ENCODE measurements at regions of chr2 and their contacts with region 1.

Region 1: DNA sequence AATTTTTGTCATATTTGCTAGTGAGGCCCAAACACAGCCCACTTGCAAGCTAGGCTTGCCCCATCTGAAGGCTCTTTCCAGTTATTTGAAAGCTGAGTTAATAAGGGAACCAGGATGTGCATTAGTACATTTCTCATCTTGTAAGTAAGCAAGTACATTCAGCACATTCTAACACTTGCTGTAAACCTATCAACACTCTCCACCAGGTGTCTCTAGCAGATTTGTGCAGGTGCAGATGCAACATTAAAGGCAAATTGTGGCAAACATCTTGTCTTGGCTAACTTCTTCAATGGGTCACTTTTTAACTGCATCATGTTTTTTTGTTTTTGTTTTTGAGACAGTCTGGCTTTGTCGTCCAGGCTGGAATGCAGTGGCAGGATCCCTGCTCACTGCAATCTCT is 25.3 kb upstream of the MFSD6 start:
- DNase-seq: peak; percentile 77
- CTCF ChIP-seq: peak; percentile 69

Region 2: DNA sequence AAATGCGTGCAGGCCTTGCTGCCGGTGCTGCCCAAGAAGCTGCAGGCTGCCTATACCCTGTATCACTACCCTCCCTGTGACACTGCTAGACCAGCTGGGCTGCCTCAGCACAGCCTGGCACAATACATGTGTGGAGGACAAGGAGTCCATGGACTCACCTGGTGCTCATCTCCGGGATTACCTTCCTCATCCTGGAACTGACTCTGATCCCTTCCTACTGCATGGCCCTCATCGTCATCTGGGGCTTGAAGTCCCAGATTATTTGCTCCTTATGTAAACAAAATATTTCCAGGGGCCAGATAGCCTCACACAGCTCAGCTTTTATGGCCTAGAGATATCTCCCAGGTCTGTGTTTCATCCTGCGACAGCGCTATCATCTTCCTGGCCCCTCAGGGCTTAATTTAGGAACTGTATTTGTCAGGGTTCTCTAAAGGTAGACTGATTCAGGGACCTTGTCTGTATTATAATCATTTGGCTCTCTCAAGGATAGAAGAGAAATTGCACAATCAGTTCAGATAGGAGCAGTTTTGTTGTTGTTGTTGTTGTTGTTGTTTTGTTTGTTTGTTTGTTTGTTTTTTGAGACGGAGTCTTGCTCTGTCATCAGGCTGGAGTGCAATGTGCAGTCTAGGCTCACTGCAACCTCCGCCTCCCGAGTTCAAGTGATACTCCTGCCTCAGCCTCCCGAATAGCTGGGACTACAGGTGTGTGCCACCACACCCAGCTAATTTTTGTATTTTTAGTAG is 898.7 kb before region 1 on chr2:
- in situ Hi-C with region 1: no loop called
- DNase-seq: no peak
- CTCF ChIP-seq: no peak

Region 3: DNA sequence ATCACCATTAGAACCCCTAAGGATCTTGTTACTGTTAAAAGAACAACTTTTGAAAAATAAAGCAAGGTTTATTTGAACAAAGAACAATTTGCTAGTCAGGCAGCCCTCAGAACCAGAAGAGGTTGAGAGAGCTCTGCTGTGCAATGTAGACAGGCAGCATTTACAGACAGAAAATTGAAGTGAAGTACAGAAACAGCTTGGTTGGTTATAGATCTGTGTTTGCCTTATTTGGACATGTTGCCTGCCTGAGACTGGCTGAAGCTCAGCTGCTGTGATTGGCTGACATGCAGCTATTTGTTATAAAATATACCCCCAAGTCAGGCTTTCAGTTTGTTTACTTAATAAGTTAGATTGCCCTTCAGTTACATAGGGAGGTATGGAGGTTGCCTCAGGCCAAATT is 332.8 kb before region 1 on chr2:
- in situ Hi-C with region 1: no loop called
- DNase-seq: no peak
- CTCF ChIP-seq: no peak

Region 4: GRCh38 chr2:190443778-190444481 is 61.1 kb after region 1 on chr2:
- in situ Hi-C with region 1: no loop called
- DNase-seq: no peak
- CTCF ChIP-seq: no peak

Region 5: DNA sequence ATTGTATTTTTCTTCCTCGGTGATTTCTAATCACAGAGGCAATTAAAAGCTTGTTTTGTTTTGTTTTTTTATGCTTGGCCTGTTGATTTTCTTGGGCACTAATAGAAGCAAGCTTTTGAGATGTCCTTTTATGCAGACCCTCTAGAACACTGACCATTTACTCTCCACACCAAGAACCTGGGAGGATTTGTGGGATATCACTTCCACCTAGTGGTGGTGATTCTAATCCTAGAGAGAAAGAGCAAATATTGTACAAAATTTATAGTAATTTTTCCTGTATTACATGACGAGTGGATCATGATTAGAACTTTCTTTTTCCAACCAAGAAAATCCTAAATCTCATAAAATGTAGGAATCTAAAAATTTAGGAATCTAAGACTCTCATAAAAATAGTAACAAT is 128.3 kb after region 1 on chr2:
- in situ Hi-C with region 1: loop called (anchors 10 kb)
- DNase-seq: no peak
- CTCF ChIP-seq: peak; percentile 37

Region 6: DNA sequence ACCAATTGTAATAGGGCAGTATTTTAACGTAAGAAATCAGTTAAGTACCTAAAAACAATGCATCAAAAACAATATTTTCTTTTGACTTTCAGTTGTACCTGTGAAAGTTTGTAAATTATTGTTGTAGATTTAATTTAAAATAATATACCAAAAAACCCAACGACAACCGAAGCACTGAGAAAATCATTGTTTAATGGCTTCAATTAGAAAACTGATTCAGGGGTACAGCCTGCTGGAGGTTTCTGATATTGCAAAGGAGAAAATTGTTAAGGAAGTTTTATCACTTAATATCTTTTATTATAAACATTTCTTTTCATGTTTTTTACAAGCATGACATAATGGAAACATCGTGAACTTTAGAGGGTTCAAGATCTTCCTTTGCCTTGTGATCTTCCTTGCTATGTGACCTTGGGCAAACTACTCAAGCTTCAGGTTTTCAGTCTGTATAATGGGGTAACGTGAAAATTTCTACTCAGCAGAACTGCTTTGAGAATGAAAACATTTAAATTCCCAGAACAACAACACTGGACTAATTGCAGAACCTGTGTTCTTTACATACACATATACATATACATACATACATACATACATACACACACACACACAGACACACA is 421.4 kb after region 1 on chr2:
- in situ Hi-C with region 1: loop called (anchors 5 kb)
- DNase-seq: no peak
- CTCF ChIP-seq: peak; percentile 40